Head of caudate nucleus (tissue), 42 donors: ENCODE measurements at regions of chr15 and their contacts with region 1.

Region 1: GRCh38 chr15:64681424-64682024 is 93.9 kb downstream of the RBPMS2 start:
- DNase-seq: peak in 20 of 42 donors; percentile 23 to 78 (median 50)

Region 2: GRCh38 chr15:64162870-64163658 is 518.5 kb before region 1 on chr15 and contains the start of gene PPIB:
- intact Hi-C with region 1: loop called (anchors 10 kb)
- DNase-seq: peak; percentile 94 to 99 (median 98)

Region 3: DNA sequence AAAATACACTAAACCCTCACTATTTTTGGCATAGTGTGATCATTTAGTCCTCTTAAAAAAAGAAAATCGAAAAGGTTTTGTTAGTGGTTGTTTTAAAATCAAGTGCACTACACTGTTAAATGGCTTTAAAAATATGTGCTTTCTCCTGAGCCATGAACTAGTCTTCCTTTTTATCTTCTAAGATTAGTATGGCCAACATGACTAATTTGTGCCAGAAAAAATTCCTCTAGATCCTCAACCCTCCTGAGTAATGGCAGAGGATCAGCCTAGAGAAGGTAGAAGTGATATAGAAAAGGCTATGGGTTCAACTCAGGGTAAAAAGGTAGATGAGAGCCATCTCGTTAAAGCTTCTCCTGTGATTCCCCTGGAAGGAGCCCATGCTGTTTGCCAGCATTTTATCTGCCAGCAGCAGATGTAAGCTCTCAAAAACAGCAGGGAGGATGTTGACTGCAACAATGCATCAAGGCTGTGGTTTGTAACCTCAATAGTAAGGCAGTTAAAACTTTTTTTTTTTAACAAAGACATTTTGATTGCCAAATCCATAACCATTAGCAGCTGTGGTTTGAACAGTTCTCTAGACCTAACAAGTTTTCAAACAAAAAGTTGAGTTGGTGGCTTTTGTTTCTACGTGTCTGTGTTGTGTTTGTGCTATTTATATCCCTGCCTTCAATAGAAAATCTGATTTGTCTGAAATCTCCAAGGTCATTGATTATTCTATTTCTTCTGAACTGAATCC is 251.4 kb before region 1 on chr15:
- intact Hi-C with region 1: loop called (anchors 10 kb)
- DNase-seq: no peak

Region 4: DNA sequence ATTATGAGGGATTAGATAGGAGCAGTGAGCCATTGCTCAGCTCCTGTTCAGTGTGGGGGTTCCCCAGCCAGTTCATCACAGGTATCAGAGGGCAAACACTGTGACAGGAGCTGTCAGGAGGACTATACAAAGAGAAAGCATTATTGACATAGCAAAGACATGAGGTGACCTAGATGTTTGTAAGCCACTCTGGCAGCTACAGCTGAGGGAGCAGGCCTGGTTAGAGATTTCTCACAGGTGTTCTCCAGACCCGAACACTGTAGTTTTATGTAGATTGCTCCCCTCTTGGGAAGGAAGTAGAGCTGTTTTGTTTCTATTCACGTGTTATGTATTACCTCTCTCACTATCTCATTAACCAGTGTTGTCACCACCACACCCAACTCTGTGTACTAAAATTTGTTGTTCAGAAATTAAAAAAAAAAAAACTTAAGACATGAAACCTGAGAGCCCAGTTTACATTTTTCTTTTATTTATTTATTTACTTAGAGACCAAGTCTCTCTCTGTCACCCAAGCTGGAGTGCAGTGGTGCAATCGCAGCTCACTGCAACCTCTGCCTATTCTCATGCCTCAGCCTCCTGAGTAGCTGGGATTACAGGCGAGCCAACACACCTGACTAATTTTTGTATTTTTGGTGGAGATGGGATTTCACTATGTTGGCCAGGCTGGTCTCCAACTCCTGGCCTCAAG is 29.8 kb before region 1 on chr15:
- intact Hi-C with region 1: no loop called
- DNase-seq: no peak

Region 5: GRCh38 chr15:64731012-64731806 is 49.7 kb after region 1 on chr15:
- intact Hi-C with region 1: loop called (anchors 2 kb)
- DNase-seq: peak; percentile 77 to 95 (median 90)